MCF 10A (cell line): ENCODE measurements at regions of chr15 and their contacts with region 1.

Region 1: DNA sequence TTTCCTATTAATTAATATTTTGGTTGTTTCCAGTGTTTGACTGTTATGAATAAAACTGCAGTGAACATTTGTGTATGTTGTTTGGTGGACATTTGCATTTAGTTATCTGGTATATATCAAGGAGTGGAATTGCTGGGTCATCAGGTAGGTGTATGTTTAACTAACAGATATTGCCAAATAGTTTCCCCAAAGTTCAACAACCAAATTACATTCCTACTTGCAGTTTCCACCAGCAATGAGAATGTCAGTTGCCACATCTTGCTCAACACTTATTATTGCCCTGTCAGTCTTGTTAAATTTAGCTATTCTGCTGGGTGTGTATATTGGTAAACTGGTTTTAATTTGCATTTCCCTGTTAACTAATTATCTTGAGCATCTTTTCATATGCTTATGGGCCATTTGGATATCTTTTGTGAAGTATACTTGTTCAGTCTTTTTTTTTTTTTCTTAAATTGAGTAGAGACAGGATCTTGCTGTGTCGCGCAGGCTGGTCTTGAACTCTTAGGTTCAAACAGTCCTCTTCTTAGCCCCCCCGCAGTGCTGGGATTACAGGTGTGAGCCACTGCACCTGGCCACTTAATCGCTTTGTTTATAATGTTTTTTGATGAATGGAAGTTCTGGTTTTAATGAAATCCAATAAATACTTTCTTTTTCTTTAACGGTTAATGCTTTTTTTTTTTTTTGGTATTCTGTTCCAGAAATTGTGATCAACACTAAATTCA is 7.9 kb downstream of the FEM1B start:
- DNase-seq: peak; percentile 46
- H3K4me3 Mint-ChIP-seq: no peak overlapping the region
- H3K27ac Mint-ChIP-seq: peak overlapping the region; percentile 25
- H3K4me1 Mint-ChIP-seq: peaks cover 46% of the 10 kb centered on the region
- H3K27me3 Mint-ChIP-seq: no peaks in the 10 kb centered on the region
- CTCF ChIP-seq: no peak

Region 2: GRCh38 chr15:68271854-68272471 is 13.5 kb before region 1 on chr15:
- CTCF ChIA-PET with region 1: interaction called, 3 read pairs
- POLR2A ChIA-PET with region 1: interaction called, 415 read pairs
- intact Hi-C with region 1: no loop called
- DNase-seq: peak; percentile 99
- H3K4me3 Mint-ChIP-seq: peak overlapping the region; percentile 38
- H3K27ac Mint-ChIP-seq: peak overlapping the region; percentile 85
- H3K4me1 Mint-ChIP-seq: peaks cover 61% of the 10 kb centered on the region
- H3K27me3 Mint-ChIP-seq: no peaks in the 10 kb centered on the region
- CTCF ChIP-seq: no peak

Region 3: DNA sequence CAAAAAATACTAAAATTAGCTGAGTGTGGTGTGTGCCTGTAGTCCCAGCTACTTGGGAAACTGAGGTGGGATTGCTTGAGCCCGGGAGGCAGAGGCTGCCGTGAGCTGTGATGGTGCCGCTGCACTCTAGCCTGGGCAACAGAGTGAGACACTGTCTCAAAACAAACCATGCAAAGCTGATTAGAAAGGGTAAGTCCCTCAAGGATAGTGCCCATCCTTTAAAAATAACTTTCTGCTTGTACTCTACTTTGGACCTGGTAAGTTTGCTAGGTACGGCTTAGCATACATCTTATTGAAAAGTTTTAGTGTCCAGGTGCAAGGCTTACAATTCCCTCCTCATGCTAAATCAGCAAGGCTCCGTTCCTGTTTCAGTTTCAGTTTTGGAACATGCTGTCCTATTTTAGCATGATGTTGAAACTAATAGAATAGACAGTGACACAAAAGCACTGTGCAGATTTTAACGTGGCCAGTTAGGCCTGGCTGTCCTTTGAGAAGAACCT is 13.5 kb after region 1 on chr15:
- CTCF ChIA-PET with region 1: interaction called, 4 read pairs
- POLR2A ChIA-PET with region 1: interaction called, 415 read pairs
- intact Hi-C with region 1: no loop called
- DNase-seq: no peak
- H3K4me3 Mint-ChIP-seq: no peak overlapping the region
- H3K27ac Mint-ChIP-seq: no peak overlapping the region
- H3K4me1 Mint-ChIP-seq: peaks cover 14% of the 10 kb centered on the region
- H3K27me3 Mint-ChIP-seq: no peaks in the 10 kb centered on the region
- CTCF ChIP-seq: no peak